GM13977 (cell line): ENCODE measurements at regions of chr17 and their contacts with region 1.

Region 1: GRCh38 chr17:74059479-74060240 is 143.8 kb upstream of the RPL38 start:
- DNase-seq: no peak
- CTCF ChIP-seq: no peak

Region 2: DNA sequence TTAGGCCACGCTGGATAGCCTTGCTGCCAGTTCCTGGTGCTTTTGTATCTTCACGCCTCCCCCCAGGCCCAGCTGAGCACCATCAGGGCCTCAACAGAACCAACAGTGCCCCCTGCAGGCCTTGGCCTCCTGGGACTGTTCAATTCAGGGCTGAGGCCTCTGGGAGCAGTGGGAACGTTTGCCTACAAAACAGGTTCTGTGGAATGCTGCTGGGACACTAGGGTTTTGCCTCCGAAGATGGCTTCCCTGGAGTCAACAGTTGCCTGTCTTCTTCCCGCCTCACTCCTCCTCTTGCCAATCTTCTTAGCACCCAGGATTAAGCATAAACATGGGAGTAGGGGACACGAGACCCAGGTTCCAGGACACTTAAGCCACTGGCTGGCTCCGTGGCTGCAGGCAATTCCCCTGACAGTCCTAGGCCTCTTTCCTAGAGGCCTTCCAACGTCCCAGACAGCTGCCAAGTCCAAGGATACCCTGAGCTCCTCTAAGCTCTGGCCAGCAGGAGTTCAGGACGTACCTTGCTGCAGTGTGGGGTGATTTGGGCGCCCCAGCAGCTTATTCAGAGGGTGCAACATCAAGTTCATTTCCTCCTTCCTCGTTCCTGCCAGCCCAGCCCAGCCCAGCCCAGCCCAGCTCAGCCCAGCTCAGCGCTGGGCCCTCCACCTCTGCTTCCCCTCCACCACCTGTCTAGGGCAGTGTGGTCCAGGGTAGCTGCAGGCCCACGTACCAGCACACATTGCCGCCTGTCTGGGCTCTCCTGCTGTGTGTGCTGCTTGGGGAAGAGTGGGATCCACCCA is 102.8 kb before region 1 on chr17:
- in situ Hi-C with region 1: loop called (anchors 25 kb)
- DNase-seq: peak; percentile 82
- CTCF ChIP-seq: peak; percentile 70